ENCODE measurements at regions of chr20 and their contacts with region 1.

Region 1: GRCh38 chr20:11880680-11881079 is 37.0 kb upstream of the BTBD3 start:
- H3K4me3 Mint-ChIP-seq: no peak overlapping the region
- H3K27ac Mint-ChIP-seq: no peak overlapping the region
- H3K4me1 Mint-ChIP-seq: peaks cover 6% of the 10 kb centered on the region
- H3K27me3 Mint-ChIP-seq: peaks cover 1% of the 10 kb centered on the region

Region 2: GRCh38 chr20:10402938-10403608 is 1477.6 kb before region 1 on chr20:
- intact Hi-C with region 1: loop called (anchors 10 kb)
- H3K4me3 Mint-ChIP-seq: no peak overlapping the region
- H3K27ac Mint-ChIP-seq: peak overlapping the region; percentile 55
- H3K4me1 Mint-ChIP-seq: peaks cover 17% of the 10 kb centered on the region
- H3K27me3 Mint-ChIP-seq: no peaks in the 10 kb centered on the region

Region 3: DNA sequence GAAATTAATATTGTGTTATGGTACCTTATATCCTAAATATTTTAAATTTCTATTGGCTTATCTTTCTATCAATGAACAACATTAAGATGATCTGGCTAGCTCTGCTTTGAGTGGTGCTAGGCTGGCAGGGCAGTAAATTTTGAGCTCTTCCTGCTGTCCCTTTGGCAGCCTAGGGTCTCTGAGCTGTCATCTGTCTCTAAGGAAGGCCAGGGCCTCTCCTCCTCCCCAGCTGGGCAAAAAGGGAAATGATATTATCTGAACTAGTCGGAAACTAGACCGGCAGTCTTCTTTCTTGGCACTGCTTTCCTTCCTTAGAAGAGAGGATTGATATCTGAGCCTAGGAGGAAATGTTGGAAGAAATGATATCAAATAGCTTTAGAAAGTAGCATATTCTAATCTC is 139.7 kb before region 1 on chr20:
- intact Hi-C with region 1: no loop called
- H3K4me3 Mint-ChIP-seq: no peak overlapping the region
- H3K27ac Mint-ChIP-seq: no peak overlapping the region
- H3K4me1 Mint-ChIP-seq: no peaks in the 10 kb centered on the region
- H3K27me3 Mint-ChIP-seq: no peaks in the 10 kb centered on the region

Measured in dendritic cell treated with granulocyte-macrophage colony-stimulating factor and Interleukin-4, amounts not matched to agents 40 ng/mL and 50 ng/mL, for 4 days (primary cell).